WTC11 (cell line): ENCODE measurements at regions of chr12 and their contacts with region 1.

Region 1: GRCh38 chr12:9750276-9751203 is 10.2 kb downstream of the CD69 start:
- DNase-seq: no peak
- ATAC-seq: peak; percentile 78
- H3K4me3 Mint-ChIP-seq: peak overlapping the region; percentile 49
- H3K27ac Mint-ChIP-seq: no peak overlapping the region
- H3K4me1 Mint-ChIP-seq: peaks cover 16% of the 10 kb centered on the region
- H3K27me3 Mint-ChIP-seq: no peaks in the 10 kb centered on the region; the same call in 1 of the 2 replicates
- CTCF ChIP-seq: peak; percentile 83

Region 2: GRCh38 chr12:9730011-9730410 is 20.5 kb before region 1 on chr12:
- CTCF ChIA-PET with region 1: interaction called, 12 read pairs
- POLR2A ChIA-PET with region 1: no interaction called
- DNase-seq: no peak
- ATAC-seq: no peak
- H3K4me3 Mint-ChIP-seq: no peak overlapping the region
- H3K27ac Mint-ChIP-seq: no peak overlapping the region
- H3K4me1 Mint-ChIP-seq: no peaks in the 10 kb centered on the region; the same call in 1 of the 2 replicates
- H3K27me3 Mint-ChIP-seq: peaks cover 4% of the 10 kb centered on the region; the same call in 1 of the 2 replicates
- CTCF ChIP-seq: no peak

Region 3: GRCh38 chr12:9760699-9761418 is 10.3 kb after region 1 on chr12 and contains the start of gene CD69:
- CTCF ChIA-PET with region 1: interaction called, 13 read pairs
- POLR2A ChIA-PET with region 1: no interaction called
- DNase-seq: no peak
- ATAC-seq: peak; percentile 48; the same call in 1 of the 2 replicates
- H3K4me3 Mint-ChIP-seq: no peak within 1 kb of the TSS
- H3K27ac Mint-ChIP-seq: no peak within 1 kb of the TSS
- H3K4me1 Mint-ChIP-seq: peaks cover 15% of the 10 kb centered on the region
- H3K27me3 Mint-ChIP-seq: no peaks in the 10 kb centered on the region
- CTCF ChIP-seq: no peak
- total RNA-seq, gene CD69: 0.34 to 0.60 TPM (median 0.42 TPM) in 3 replicates

Region 4: DNA sequence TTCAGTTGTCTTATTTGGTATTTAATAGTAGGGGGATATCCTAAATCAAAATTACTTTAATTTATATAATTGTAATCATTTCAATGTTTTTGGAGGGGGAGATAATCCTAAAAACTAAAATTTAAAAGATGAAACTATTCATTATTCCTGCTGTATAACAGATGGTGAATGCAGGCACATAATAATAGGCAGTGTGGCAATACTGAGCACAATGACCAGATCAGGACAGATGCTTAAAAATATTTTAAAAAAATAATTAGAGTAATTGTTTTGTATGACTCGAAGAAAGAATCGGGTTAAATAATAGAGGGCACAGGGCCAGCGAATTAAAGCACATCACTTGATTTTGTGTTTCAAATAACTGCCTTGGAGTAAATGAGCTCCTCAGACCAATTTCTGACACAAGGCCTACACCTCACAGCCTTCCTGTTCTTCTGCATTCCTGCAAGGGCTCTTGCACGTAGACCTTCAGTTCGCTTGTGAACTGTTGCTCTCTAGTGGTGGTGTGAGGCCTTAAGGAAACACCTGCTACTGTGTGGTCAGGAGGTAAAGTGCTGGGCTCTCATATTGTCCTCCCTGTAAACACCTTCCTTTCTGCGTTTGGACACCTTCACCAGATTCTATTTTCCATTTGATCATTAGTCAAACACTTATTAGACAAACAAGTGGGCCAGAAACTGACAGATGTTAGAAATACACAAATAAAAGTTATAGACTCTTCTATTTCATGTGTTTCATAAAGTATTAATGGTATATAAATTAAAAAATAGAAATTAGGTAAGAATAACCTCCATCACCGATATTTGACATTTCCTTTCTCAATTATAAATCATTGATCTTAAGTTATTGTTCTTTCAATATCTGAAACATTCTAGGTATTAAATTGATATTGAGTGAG is 47.4 kb after region 1 on chr12:
- CTCF ChIA-PET with region 1: interaction called, 148 read pairs
- POLR2A ChIA-PET with region 1: no interaction called
- DNase-seq: peak; percentile 63
- ATAC-seq: peak; percentile 100
- H3K4me3 Mint-ChIP-seq: no peak overlapping the region
- H3K27ac Mint-ChIP-seq: no peak overlapping the region
- H3K4me1 Mint-ChIP-seq: peaks cover 26% of the 10 kb centered on the region
- H3K27me3 Mint-ChIP-seq: no peaks in the 10 kb centered on the region; the same call in 1 of the 2 replicates
- CTCF ChIP-seq: no peak

Region 5: GRCh38 chr12:9827209-9827888 is 76.8 kb after region 1 on chr12 and contains the start of gene KLRF1:
- CTCF ChIA-PET with region 1: interaction called, 12 read pairs
- POLR2A ChIA-PET with region 1: no interaction called
- DNase-seq: no peak
- ATAC-seq: no peak
- H3K4me3 Mint-ChIP-seq: no peak within 1 kb of the TSS
- H3K27ac Mint-ChIP-seq: no peak within 1 kb of the TSS
- H3K4me1 Mint-ChIP-seq: no peaks in the 10 kb centered on the region
- H3K27me3 Mint-ChIP-seq: peaks cover 8% of the 10 kb centered on the region
- CTCF ChIP-seq: no peak
- total RNA-seq, gene KLRF1: not detected in 3 replicates

Region 6: GRCh38 chr12:10012630-10013330 is 262.2 kb after region 1 on chr12:
- CTCF ChIA-PET with region 1: interaction called, 12 read pairs
- POLR2A ChIA-PET with region 1: no interaction called
- DNase-seq: no peak
- ATAC-seq: no peak
- H3K4me3 Mint-ChIP-seq: no peak overlapping the region
- H3K27ac Mint-ChIP-seq: no peak overlapping the region
- H3K4me1 Mint-ChIP-seq: peaks cover 10% of the 10 kb centered on the region
- H3K27me3 Mint-ChIP-seq: no peaks in the 10 kb centered on the region
- CTCF ChIP-seq: no peak

Region 7: DNA sequence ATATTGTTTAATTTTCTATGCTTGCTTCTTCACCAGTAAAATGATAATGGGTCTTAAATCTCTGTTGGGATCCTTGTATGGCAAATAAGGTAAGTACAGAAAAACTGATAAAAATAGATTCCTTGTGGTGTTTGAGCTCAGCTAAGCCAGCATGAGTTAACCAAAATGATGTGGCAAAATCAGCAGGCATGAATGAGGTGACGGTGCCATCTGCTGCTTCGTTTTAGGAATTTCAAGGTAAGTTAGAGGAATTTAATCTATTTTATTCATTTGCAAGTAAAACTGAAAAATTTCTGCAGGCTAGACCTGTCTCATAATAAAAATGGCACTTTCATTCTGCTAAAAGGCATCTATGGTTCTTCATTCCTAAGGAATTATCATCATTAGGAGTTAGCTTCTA is 389.5 kb after region 1 on chr12:
- CTCF ChIA-PET with region 1: interaction called, 12 read pairs
- POLR2A ChIA-PET with region 1: no interaction called
- DNase-seq: peak; percentile 42
- ATAC-seq: peak; percentile 50; the same call in 1 of the 2 replicates
- H3K4me3 Mint-ChIP-seq: no peak overlapping the region
- H3K27ac Mint-ChIP-seq: no peak overlapping the region
- H3K4me1 Mint-ChIP-seq: peaks cover 5% of the 10 kb centered on the region
- H3K27me3 Mint-ChIP-seq: no peaks in the 10 kb centered on the region
- CTCF ChIP-seq: peak; percentile 37; the same call in 1 of the 2 replicates